Activated B cell treated with CpG ODN at 0.5 μM for 24 hours (primary cell): ENCODE measurements at regions of chr7 and their contacts with region 1.

Region 1: DNA sequence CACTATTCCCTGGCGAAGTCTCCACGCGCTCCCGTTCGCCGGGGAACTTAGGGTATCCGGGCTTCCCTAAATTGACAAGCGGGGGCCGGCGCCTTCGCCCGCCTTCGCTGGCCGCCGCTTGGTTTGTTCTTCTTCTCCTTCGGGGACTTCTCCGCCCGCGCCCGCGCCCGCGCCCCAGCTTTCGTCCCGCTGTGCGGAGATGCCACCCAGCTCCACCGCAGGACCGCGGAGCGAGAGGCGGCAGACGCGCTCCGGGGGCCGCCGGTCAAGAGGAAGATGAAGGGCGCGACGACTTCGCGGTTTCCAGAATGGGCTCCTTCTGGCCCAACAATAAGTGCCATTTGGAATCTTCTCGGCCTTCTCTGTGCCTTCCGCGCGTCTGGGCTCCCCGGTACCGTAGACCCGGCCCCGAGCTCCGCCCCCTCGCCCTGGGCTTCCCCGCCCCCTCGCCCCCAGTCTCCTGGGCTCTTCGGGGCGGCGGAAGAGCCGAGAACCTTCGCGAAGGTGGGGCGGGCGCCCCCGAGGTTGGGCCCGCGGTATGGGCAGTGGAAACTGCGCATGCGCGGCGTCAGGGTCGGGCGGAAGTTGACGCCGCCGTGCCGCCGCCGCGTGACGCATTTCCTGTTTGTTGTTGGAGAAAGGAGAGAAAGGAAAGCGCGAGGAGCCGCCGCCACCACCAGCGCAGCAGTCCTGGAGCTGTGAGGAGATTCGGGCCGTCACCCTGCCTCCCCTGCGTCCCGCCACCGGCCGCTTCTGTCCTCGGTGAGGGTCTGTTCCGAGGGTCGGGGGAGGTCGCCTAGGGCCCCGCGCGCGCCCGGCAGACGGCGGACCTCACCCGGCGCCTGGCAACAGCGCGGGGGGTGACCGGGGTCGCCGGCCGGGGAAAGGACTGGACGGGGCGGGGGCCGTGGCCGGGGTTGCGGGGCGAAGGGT is at the start of gene DNAJB6:
- DNase-seq: peak; percentile 97
- ATAC-seq: peak; percentile 82
- H3K4me3 Mint-ChIP-seq: peak within 1 kb of the TSS; percentile 95
- H3K27ac Mint-ChIP-seq: peak within 1 kb of the TSS; percentile 97
- H3K4me1 Mint-ChIP-seq: peaks cover 63% of the 10 kb centered on the region
- H3K27me3 Mint-ChIP-seq: no peaks in the 10 kb centered on the region
- CTCF ChIP-seq: no peak
- total RNA-seq, gene DNAJB6: 74.3 and 75.6 TPM in 2 replicates

Region 2: GRCh38 chr7:156892821-156893706 is 443.6 kb before region 1 on chr7 and contains the start of gene LMBR1:
- CTCF ChIA-PET with region 1: no interaction called
- POLR2A ChIA-PET with region 1: interaction called, 3 read pairs
- intact Hi-C with region 1: loop called (anchors 2 kb)
- DNase-seq: peak; percentile 98
- ATAC-seq: peak; percentile 86
- H3K4me3 Mint-ChIP-seq: peak within 1 kb of the TSS; percentile 91
- H3K27ac Mint-ChIP-seq: peak within 1 kb of the TSS; percentile 88
- H3K4me1 Mint-ChIP-seq: peaks cover 42% of the 10 kb centered on the region
- H3K27me3 Mint-ChIP-seq: no peaks in the 10 kb centered on the region
- CTCF ChIP-seq: no peak
- total RNA-seq, gene LMBR1: 54.6 and 67.9 TPM in 2 replicates

Region 3: DNA sequence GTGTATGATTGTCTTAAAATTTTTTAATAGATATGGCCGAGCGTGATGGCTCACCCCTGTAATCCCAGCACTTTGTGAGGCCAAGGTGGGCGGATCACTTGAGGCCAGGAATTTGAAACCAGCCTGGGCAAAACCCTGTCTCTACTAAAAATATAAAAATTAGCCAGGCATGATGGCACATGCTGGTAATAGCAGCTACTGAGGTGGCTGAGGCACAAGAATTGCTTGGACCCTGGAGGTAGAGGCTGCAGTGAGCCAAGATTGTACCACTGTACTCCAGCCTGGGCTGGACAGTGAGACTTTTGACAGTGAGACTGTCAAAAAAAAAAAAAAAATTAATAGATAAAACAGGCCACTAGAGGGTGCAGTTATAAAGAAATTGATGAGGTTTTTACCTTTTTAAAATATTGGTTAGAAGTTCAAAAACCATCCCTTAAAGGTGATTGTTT is 366.7 kb before region 1 on chr7:
- CTCF ChIA-PET with region 1: no interaction called
- POLR2A ChIA-PET with region 1: no interaction called
- intact Hi-C with region 1: loop called (anchors 1 kb)
- DNase-seq: no peak
- ATAC-seq: no peak
- H3K4me3 Mint-ChIP-seq: no peak overlapping the region
- H3K27ac Mint-ChIP-seq: no peak overlapping the region
- H3K4me1 Mint-ChIP-seq: no peaks in the 10 kb centered on the region
- H3K27me3 Mint-ChIP-seq: no peaks in the 10 kb centered on the region
- CTCF ChIP-seq: no peak

Region 4: GRCh38 chr7:157058701-157059100 is 277.9 kb before region 1 on chr7:
- CTCF ChIA-PET with region 1: no interaction called
- POLR2A ChIA-PET with region 1: no interaction called
- intact Hi-C with region 1: no loop called
- DNase-seq: no peak
- ATAC-seq: no peak
- H3K4me3 Mint-ChIP-seq: no peak overlapping the region
- H3K27ac Mint-ChIP-seq: no peak overlapping the region
- H3K4me1 Mint-ChIP-seq: no peaks in the 10 kb centered on the region
- H3K27me3 Mint-ChIP-seq: peaks cover 10% of the 10 kb centered on the region
- CTCF ChIP-seq: no peak

Region 5: DNA sequence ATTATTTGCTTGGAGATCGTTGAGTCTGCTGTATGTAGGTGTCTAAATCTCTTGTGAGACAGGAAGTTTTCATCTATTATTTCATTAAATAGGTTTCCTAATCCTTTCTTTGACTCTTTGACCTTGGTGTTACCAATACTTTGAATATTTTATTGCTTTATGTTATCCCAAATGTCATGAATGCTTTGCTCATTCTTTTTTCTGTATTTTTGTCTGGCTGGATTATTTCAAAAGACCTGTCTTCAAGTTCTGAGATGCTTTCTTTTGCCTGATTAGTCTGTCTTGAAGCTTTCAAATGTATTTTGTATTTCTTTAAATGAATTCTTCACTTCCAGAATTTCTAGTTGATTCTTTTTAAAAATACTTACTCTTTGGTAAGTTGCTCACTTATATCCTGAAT is 170.7 kb before region 1 on chr7:
- CTCF ChIA-PET with region 1: no interaction called
- POLR2A ChIA-PET with region 1: no interaction called
- intact Hi-C with region 1: no loop called
- DNase-seq: no peak
- ATAC-seq: no peak
- H3K4me3 Mint-ChIP-seq: no peak overlapping the region
- H3K27ac Mint-ChIP-seq: no peak overlapping the region
- H3K4me1 Mint-ChIP-seq: no peaks in the 10 kb centered on the region
- H3K27me3 Mint-ChIP-seq: no peaks in the 10 kb centered on the region
- CTCF ChIP-seq: no peak

Region 6: DNA sequence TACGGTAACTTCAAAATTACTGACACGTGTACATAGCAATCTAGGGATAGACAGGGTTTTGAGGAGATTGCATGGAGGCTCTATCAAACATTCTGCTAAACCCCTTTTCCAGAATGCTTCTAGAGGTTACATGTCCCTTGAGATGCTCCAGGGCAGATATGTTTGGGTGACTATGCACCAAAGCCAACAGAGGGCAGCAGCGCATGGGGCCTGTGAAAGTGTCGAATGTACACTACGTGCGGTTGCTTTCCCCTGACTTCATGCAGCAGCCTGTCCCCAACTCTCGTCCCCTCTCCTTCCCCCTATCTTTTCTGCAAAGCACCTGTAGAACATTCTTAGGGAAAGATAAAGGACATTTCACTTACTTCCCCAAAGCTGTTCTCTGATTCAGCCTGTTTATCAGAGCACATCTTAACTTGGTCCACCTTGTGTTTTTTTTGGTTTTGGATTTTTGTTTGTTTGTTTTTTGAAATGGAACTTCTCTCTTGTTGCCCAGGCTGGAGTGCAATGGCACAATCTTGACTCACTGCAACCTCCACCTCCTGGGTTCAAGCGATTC is 107.7 kb before region 1 on chr7:
- CTCF ChIA-PET with region 1: no interaction called
- POLR2A ChIA-PET with region 1: no interaction called
- intact Hi-C with region 1: loop called (anchors 1 kb)
- DNase-seq: no peak
- ATAC-seq: no peak
- H3K4me3 Mint-ChIP-seq: no peak overlapping the region
- H3K27ac Mint-ChIP-seq: no peak overlapping the region
- H3K4me1 Mint-ChIP-seq: peaks cover 3% of the 10 kb centered on the region
- H3K27me3 Mint-ChIP-seq: no peaks in the 10 kb centered on the region
- CTCF ChIP-seq: no peak

Region 7: DNA sequence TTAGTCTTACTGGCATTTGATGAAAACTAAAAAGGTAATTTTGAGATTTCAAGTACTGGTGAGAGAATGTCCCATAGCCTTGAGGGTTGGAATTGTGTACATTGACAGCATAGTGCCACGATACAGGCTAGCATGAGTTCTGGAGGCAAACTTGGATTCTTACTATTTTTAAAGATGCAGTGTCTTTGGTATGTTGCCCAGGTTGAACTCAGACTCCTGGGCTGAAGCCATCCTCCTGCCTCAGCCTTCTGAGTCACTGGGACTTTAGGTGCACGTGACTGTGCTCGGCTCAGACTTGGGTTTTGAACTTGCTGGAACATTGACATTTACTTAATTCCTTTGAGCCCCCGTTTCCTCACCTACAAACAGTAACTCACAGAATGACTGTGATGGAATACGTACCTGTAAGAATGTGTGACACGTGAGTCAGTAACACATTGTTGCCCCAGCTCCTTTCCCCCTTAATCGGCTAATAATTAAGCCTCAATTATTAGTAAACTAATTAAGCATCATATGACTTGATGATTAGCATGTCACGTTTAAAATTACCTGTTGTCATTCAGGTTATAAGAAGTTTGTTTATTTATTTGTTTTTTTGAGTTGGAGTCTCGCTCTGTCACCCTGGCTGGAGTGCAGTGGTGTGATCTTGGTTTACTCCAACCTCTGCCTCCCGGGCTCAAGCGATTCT is 10.7 kb after region 1 on chr7:
- CTCF ChIA-PET with region 1: no interaction called
- POLR2A ChIA-PET with region 1: interaction called, 3 read pairs
- intact Hi-C with region 1: loop called (anchors 1 kb)
- DNase-seq: no peak
- ATAC-seq: no peak
- H3K4me3 Mint-ChIP-seq: no peak overlapping the region
- H3K27ac Mint-ChIP-seq: no peak overlapping the region
- H3K4me1 Mint-ChIP-seq: peaks cover 83% of the 10 kb centered on the region
- H3K27me3 Mint-ChIP-seq: no peaks in the 10 kb centered on the region
- CTCF ChIP-seq: no peak